Right cardiac atrium (tissue), 5 donors: ENCODE measurements at regions of chr12 and their contacts with region 1.

Region 1: DNA sequence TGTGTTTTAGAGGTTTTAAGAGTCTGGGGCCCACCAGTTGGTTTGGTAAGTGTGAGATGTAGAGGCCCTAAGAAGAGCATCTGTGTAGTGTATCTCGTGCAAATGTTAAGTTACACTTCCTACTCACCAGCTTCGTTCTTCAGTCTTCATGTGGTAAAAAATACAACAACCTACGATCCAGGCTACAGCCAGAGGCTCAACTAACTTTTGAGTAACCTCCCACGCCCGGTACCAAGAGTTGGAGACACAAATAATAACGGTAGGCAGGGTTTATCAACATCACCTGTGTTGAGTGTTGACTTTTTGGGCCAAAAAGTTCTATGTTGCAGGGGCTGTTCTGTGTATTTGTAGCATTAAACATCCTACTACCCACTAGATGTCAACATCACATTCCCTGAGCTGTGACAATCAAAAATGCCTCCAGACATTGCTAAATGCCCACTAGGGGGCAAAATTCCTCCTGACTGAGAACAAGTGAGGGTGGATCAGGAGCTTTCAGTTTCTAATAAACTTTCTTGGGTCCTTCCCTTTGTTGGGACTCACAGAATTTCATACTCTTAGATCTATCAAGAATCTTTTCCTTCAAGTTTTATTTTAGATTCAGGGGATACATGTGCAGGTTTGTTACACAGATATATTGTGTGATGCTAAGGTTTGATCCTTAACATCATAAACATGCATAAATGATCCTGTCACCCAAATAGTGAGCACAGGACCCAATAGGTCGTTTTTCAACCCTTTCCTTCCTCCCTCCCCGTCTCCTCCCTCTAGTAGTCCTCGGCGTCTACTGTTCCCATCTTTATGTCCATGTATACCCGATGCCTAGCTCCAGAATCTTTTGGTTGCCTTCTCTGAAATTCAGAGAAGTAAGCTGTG is 94.7 kb downstream of the SLC2A13 start:
- DNase-seq: peak in 1 of 3 donors; percentile 26
- ATAC-seq: peak; percentile 94
- H3K4me3 ChIP-seq: peak overlapping the region; percentile 51
- H3K27ac ChIP-seq: peak overlapping the region; percentile 53
- H3K4me1 ChIP-seq: peaks cover 4% of the 10 kb centered on the region
- H3K27me3 ChIP-seq: no peaks in the 10 kb centered on the region

Region 2: DNA sequence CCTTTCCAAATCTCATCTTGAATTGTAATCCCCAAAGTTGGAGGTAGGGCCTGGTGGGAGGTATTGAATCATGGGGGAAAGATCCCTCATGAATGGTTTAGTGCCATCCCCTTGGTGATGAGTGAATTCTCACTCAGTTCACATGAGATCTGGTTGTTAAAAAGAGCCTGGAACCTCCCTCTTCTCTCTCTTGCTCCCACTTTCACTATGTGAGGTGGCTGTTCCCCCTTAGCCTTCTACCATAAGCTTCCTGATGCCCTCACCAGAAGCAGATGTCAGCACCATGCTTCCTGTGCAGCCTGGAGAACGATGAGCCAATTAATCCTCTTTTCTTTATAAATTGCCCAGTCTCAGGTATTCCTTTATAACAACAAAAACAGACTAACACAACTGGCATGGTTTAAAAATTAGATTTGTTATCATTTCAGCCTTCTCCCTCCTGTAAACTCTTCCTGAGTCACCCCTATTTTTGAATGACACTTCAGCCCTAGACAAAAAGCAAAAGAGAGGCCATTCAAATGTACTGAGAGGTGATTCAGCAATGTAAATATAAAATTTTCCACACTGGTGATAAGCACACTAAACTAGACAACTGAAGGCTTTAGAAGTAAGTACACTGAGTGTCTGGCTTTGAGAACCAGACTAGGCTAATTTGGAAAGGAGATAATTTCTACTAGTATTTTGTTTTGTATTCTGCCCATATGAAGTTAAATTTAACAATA is 179.4 kb before region 1 on chr12:
- intact Hi-C with region 1: no loop called
- DNase-seq: no peak
- ATAC-seq: no peak
- H3K4me3 ChIP-seq: no peak overlapping the region
- H3K27ac ChIP-seq: no peak overlapping the region
- H3K4me1 ChIP-seq: no peaks in the 10 kb centered on the region
- H3K27me3 ChIP-seq: no peaks in the 10 kb centered on the region

Region 3: GRCh38 chr12:40031965-40032364 is 20.8 kb after region 1 on chr12:
- intact Hi-C with region 1: loop called in 1 of 4 experiments (anchors 2 kb)
- DNase-seq: no peak
- ATAC-seq: no peak
- H3K4me3 ChIP-seq: no peak overlapping the region
- H3K27ac ChIP-seq: no peak overlapping the region
- H3K4me1 ChIP-seq: no peaks in the 10 kb centered on the region
- H3K27me3 ChIP-seq: no peaks in the 10 kb centered on the region

Region 4: GRCh38 chr12:40117818-40118217 is 106.7 kb after region 1 on chr12:
- intact Hi-C with region 1: no loop called
- DNase-seq: no peak
- ATAC-seq: no peak
- H3K4me3 ChIP-seq: no peak overlapping the region
- H3K27ac ChIP-seq: no peak overlapping the region
- H3K4me1 ChIP-seq: no peaks in the 10 kb centered on the region
- H3K27me3 ChIP-seq: no peaks in the 10 kb centered on the region